Tibial artery (tissue), 4 donors: ENCODE measurements at regions of chr5 and their contacts with region 1.

Region 1: DNA sequence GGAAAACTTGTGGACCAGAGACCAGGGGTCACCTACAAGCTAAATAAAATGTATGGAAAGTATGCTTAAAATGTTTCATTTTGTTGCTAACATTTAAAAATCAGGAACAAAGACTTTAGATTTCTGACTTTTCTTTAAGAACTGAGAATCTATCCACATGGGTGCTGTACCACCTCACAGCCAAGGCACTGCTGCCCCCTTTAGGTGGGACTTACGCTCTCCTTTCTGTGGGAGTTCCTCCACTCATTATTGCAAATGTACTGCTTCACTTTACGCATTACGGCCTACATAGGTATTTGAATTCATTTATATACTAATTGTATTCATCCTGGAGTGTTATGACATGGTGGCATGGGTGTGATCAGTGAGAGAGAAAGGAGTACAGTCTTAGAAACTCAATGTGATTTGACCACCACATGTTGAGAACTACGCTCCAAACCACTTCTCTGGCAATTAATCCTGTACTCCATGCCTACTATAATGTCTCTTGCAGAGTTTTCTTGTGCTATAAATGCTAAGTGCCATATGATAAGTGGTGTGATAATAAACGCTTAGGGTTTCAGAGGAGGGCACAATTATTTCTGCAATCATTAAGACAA is 24.7 kb upstream of the CETN3 start:
- DNase-seq: no peak
- H3K4me3 ChIP-seq: no peak overlapping the region
- H3K27ac ChIP-seq: no peak overlapping the region
- H3K4me1 ChIP-seq: no peaks in the 10 kb centered on the region
- H3K27me3 ChIP-seq: no peaks in the 10 kb centered on the region
- CTCF ChIP-seq: peak; percentile 35 to 58

Region 2: GRCh38 chr5:90529194-90529938 is 95.2 kb after region 1 on chr5 and contains the start of gene LYSMD3:
- intact Hi-C with region 1: loop called (anchors 5 kb)
- DNase-seq: peak; percentile 96 to 99
- H3K4me3 ChIP-seq: peak within 1 kb of the TSS; percentile 64 to 95
- H3K27ac ChIP-seq: peak within 1 kb of the TSS; percentile 84 to 98
- H3K4me1 ChIP-seq: peaks cover 0 to 34% (median 18%) of the 10 kb centered on the region in 4 donors
- H3K27me3 ChIP-seq: no peaks in the 10 kb centered on the region
- CTCF ChIP-seq: no peak

Region 3: DNA sequence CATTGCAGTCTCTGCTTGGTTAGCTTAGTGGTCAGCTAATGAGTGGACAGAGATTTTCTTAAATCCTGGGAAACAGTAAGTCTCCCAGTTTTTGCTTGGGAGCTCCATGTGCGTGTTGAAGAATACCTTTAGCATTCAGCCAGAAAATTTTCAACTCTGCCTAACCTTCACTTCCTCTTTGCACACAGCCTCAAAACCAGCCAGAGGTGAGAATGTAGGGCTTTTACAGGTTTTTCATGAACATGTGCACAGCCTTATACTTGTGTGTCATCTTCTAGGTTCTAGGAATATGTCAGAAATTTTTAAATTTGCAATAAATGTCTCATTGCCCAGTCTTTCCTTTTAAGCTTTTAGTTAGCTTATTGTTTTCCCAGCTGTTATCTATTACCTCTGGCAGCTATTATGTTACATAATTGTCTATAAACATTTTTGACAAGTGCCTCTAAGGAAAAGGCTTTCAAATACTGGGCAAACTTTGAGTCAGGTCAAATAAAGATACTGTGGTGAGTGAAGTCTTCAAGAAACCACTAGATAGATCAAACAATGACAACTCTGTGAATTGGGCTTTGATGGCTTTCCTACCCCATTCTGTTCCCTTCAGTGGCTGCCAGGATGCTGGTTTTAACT is 137.0 kb after region 1 on chr5:
- intact Hi-C with region 1: no loop called
- DNase-seq: no peak
- H3K4me3 ChIP-seq: no peak overlapping the region
- H3K27ac ChIP-seq: no peak overlapping the region
- H3K4me1 ChIP-seq: no peaks in the 10 kb centered on the region
- H3K27me3 ChIP-seq: no peaks in the 10 kb centered on the region
- CTCF ChIP-seq: no peak

Region 4: GRCh38 chr5:90783460-90784333 is 349.5 kb after region 1 on chr5:
- intact Hi-C with region 1: loop called (anchors 10 kb)
- DNase-seq: peak in 1 of 2 donors; percentile 53
- H3K4me3 ChIP-seq: no peak overlapping the region
- H3K27ac ChIP-seq: no peak overlapping the region
- H3K4me1 ChIP-seq: no peaks in the 10 kb centered on the region
- H3K27me3 ChIP-seq: no peaks in the 10 kb centered on the region
- CTCF ChIP-seq: peak; percentile 59 to 84